ENCODE measurements at regions of chr5 and their contacts with region 1.

Region 1: DNA sequence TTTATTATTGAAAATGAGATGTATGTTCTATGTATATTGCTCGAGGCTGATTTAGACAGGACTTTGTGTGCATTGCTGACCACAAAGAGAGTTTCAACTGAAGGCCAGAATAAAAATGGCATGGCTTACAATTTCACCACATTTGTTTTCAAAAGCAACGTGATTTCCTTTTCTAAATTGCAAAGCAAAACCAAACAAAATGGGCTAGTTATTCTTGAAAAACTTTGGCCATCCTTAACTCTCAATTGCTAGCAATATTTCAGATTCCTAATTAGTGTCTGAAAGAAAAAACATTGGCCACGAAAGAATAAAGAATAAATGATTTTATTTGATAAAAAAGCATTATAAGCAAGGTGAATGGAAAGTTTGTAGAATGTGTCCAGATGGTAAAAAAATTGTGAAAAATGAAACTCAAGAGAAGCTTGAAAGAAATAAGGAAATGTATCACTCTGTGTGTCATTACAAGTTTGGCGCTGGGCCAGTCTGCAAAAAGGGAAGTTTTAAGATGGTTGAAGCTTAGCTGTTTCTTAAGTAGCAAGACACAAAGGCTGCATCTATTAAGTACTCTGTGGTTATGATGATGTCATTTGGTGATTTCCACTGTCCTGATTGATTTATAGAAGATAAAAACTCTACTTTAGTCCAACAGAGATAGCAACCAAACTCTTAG is 89.2 kb upstream of the PRLR start:
- DNase-seq: peak; percentile 96 to 99 (median 99)
- H3K4me3 ChIP-seq: peak overlapping the region; percentile 11 to 53 (median 22)
- H3K4me3 Mint-ChIP-seq: peak overlapping the region; percentile 60 to 70
- H3K27ac ChIP-seq: peak overlapping the region; percentile 30 to 85
- H3K27ac Mint-ChIP-seq: peak overlapping the region; percentile 93 to 97 (median 96)
- H3K4me1 ChIP-seq: peaks cover 15 to 25% of the 10 kb centered on the region in 2 donors
- H3K4me1 Mint-ChIP-seq: peaks cover 12% of the 10 kb centered on the region
- H3K27me3 ChIP-seq: no peaks in the 10 kb centered on the region
- H3K27me3 Mint-ChIP-seq: peaks cover 0 to 1% (median 0%) of the 10 kb centered on the region in 3 donors
- CTCF ChIP-seq: no peak

Region 2: DNA sequence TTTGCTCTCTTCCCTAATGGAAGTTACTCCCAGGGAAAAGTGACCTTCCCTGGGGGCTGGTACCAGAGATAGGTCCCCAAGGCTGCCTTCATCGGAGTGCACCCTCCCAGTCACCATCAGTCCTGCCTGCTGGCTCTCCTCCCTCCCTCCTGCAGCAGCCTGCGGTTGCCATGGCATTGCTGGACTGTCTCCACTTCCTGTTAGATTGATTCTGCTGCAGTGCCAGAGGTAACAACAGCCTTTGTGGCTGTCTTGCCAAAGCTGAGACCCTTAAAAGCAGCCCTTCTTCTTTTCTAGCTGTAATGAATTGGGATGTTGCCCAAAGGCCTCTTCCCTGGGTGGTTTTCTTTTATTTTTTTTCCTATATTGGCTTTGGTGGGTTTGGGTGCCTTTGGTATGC is 11.0 kb before region 1 on chr5:
- intact Hi-C with region 1: no loop called
- DNase-seq: no peak
- H3K4me3 ChIP-seq: no peak overlapping the region
- H3K4me3 Mint-ChIP-seq: no peak overlapping the region
- H3K27ac ChIP-seq: no peak overlapping the region
- H3K27ac Mint-ChIP-seq: peak overlapping the region in 1 of 7 donors; percentile 4
- H3K4me1 ChIP-seq: peaks cover 16 to 24% of the 10 kb centered on the region in 2 donors
- H3K4me1 Mint-ChIP-seq: peaks cover 25% of the 10 kb centered on the region
- H3K27me3 ChIP-seq: no peaks in the 10 kb centered on the region
- H3K27me3 Mint-ChIP-seq: peaks cover 0 to 2% (median 2%) of the 10 kb centered on the region in 3 donors
- CTCF ChIP-seq: no peak

Region 3: GRCh38 chr5:35393901-35394300 is 74.4 kb after region 1 on chr5:
- intact Hi-C with region 1: loop called in 1 of 2 experiments (anchors 5 kb)
- DNase-seq: peak; percentile 68 to 89 (median 70)
- H3K4me3 ChIP-seq: no peak overlapping the region
- H3K4me3 Mint-ChIP-seq: no peak overlapping the region
- H3K27ac ChIP-seq: peak overlapping the region; percentile 35 to 84
- H3K27ac Mint-ChIP-seq: peak overlapping the region; percentile 86 to 94 (median 88)
- H3K4me1 ChIP-seq: peaks cover 0 to 13% of the 10 kb centered on the region in 2 donors
- H3K4me1 Mint-ChIP-seq: peaks cover 6% of the 10 kb centered on the region
- H3K27me3 ChIP-seq: no peaks in the 10 kb centered on the region
- H3K27me3 Mint-ChIP-seq: peaks cover 0 to 2% (median 0%) of the 10 kb centered on the region in 3 donors
- CTCF ChIP-seq: no peak

Region 4: GRCh38 chr5:35478856-35479682 is 159.6 kb after region 1 on chr5:
- intact Hi-C with region 1: loop called (anchors 10 kb)
- DNase-seq: peak; percentile 29 to 69 (median 51)
- H3K4me3 ChIP-seq: peak overlapping the region in 2 of 3 experiments; percentile 41 to 47
- H3K4me3 Mint-ChIP-seq: peak overlapping the region; percentile 56 to 68
- H3K27ac ChIP-seq: peak overlapping the region in 1 of 2 donors; percentile 93
- H3K27ac Mint-ChIP-seq: peak overlapping the region; percentile 93 to 98 (median 97)
- H3K4me1 ChIP-seq: peaks cover 65 to 80% of the 10 kb centered on the region in 2 donors
- H3K4me1 Mint-ChIP-seq: peaks cover 70% of the 10 kb centered on the region
- H3K27me3 ChIP-seq: no peaks in the 10 kb centered on the region
- H3K27me3 Mint-ChIP-seq: no peaks in the 10 kb centered on the region
- CTCF ChIP-seq: no peak

Region 5: DNA sequence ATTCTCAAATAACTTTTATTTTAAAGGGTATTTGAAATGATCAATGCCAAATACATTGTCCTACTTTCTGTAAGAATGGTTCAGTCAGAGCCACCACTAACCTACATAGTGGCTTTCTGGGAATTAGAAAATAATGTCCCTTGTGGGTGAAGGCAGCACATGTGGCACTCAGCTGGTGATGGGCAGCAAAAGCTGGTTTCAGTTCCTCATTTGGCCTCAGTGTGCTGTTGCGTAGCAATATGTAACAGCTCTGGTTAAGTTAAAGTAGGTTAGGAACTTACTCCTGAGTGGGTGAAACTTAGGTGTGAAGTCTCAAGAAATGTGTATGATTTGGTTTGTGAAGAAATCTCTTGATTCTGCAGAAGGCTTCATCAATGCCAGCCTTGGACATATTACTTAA is 198.6 kb after region 1 on chr5:
- intact Hi-C with region 1: no loop called
- DNase-seq: peak; percentile 79 to 89 (median 80)
- H3K4me3 ChIP-seq: no peak overlapping the region
- H3K4me3 Mint-ChIP-seq: no peak overlapping the region
- H3K27ac ChIP-seq: peak overlapping the region in 1 of 2 donors; percentile 3
- H3K27ac Mint-ChIP-seq: no peak overlapping the region
- H3K4me1 ChIP-seq: peaks cover 0 to 5% of the 10 kb centered on the region in 2 donors
- H3K4me1 Mint-ChIP-seq: peaks cover 10% of the 10 kb centered on the region
- H3K27me3 ChIP-seq: no peaks in the 10 kb centered on the region
- H3K27me3 Mint-ChIP-seq: no peaks in the 10 kb centered on the region
- CTCF ChIP-seq: peak; percentile 17